ENCODE measurements at regions of chr6 and their contacts with region 1.

Region 1: GRCh38 chr6:43774776-43775534 is 4.9 kb downstream of the VEGFA start:
- DNase-seq: peak; percentile 75
- ATAC-seq: no peak
- H3K4me3 Mint-ChIP-seq: no peak overlapping the region
- H3K27ac Mint-ChIP-seq: no peak overlapping the region
- H3K4me1 Mint-ChIP-seq: peaks cover 50% of the 10 kb centered on the region
- H3K27me3 Mint-ChIP-seq: no peaks in the 10 kb centered on the region

Region 2: GRCh38 chr6:43723737-43724295 is 51.1 kb before region 1 on chr6:
- CTCF ChIA-PET with region 1: interaction called, 27 read pairs
- POLR2A ChIA-PET with region 1: interaction called, 3 read pairs
- DNase-seq: peak; percentile 83
- ATAC-seq: peak; percentile 83
- H3K4me3 Mint-ChIP-seq: no peak overlapping the region
- H3K27ac Mint-ChIP-seq: no peak overlapping the region
- H3K4me1 Mint-ChIP-seq: peaks cover 30% of the 10 kb centered on the region
- H3K27me3 Mint-ChIP-seq: peaks cover 18% of the 10 kb centered on the region

Region 3: DNA sequence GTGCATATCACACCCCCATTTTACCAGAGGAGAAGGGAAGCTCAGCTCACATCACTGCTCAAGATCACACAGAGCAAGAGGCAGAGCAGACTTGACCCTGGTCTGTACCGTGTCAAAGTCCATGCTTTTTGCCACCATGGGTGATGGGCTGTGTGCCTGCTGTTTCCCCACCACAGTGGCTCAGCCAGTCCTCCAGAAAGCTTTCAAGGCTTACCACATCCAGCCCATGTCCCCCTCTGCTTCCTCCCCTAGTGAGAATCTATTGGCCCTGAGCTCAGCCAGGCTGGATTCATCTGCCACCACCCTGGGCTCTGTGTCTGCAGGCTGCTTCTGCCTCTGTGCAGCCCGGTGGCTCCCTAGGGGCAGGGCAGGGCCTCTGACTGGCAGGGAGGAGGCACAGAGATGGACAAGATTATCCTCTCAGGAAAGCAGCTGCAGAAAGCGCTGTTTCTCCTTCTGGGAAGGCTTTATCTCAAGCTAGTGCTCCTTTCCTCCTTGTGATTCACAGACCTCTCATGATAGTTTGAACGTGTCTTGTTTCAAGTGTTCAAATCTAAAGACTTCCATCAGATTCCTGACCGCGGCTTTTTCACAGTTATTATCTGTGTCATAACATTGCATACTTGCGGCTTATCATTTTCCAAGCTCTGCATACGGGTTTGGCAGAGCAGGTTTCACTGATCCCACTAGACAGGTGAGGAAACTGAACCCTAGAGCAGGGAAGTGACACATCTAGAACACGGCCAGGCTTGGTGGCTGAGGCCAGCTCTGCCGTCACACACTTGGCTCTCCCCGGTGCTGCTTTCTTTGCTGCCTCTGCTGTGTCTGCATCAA is 32.5 kb after region 1 on chr6:
- CTCF ChIA-PET with region 1: interaction called, 18 read pairs
- POLR2A ChIA-PET with region 1: no interaction called
- DNase-seq: peak; percentile 29
- ATAC-seq: peak; percentile 50
- H3K4me3 Mint-ChIP-seq: no peak overlapping the region
- H3K27ac Mint-ChIP-seq: no peak overlapping the region
- H3K4me1 Mint-ChIP-seq: peaks cover 26% of the 10 kb centered on the region
- H3K27me3 Mint-ChIP-seq: peaks cover 4% of the 10 kb centered on the region

Region 4: GRCh38 chr6:43828711-43829110 is 53.8 kb after region 1 on chr6:
- CTCF ChIA-PET with region 1: interaction called, 11 read pairs
- POLR2A ChIA-PET with region 1: no interaction called
- DNase-seq: no peak
- ATAC-seq: no peak
- H3K4me3 Mint-ChIP-seq: no peak overlapping the region
- H3K27ac Mint-ChIP-seq: no peak overlapping the region
- H3K4me1 Mint-ChIP-seq: peaks cover 4% of the 10 kb centered on the region
- H3K27me3 Mint-ChIP-seq: peaks cover 8% of the 10 kb centered on the region